Prostate gland (tissue), 2 donors: ENCODE measurements at regions of chr6 and their contacts with region 1.

Region 1: DNA sequence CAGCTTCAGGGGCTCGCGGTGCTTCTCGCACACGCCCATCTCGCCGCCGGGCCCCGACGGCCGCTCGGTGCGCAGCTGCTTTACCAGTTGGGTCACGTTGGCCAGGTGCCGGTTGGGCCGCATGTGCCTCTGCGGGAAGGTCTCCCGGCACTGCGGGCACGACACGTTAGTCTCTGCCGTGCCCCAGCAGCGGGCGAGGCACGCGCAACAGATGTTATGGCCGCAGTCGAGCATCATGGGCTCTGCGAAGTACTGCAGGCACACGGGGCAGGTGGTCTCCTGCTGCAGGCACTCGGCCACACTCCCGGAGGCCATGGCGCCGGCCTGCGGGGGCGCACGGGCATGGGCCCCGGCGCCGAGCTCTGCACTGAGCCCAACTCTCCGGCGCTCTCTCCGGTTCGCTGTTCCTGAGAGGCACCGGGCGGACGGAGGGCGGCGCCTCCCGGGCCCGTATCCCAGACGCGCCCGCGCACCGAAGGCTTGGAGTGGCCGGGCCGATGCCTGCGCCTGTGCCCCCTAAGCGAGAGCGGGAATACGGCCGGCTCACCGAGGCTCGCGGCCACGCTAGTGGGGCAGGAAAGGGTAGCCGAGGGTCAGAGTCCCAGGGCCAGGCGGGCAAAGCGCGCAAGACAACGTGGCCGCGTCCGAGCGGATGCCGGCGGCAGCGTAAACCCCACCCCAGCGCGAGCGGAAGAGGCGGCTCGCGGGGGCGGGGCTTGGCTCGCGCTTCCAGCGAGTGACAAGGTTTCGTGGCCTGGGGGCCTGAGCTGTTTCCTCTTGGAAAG is at the start of gene TRIM27:
- DNase-seq: peak; percentile 91
- H3K4me3 ChIP-seq: peak within 1 kb of the TSS; percentile 56 to 80
- H3K27ac ChIP-seq: peak within 1 kb of the TSS; percentile 93
- H3K4me1 ChIP-seq: no peaks in the 10 kb centered on the region
- H3K27me3 ChIP-seq: no peaks in the 10 kb centered on the region
- CTCF ChIP-seq: no peak
- POLR2A ChIP-seq: peak; percentile 85
- total RNA-seq, gene TRIM27: 79.2 to 85.7 TPM

Region 2: GRCh38 chr6:28657769-28658465 is 265.6 kb before region 1 on chr6:
- intact Hi-C with region 1: no loop called
- DNase-seq: no peak
- H3K4me3 ChIP-seq: peak overlapping the region in 1 of 2 donors; percentile 23
- H3K27ac ChIP-seq: no peak overlapping the region
- H3K4me1 ChIP-seq: no peaks in the 10 kb centered on the region
- H3K27me3 ChIP-seq: no peaks in the 10 kb centered on the region
- CTCF ChIP-seq: no peak
- POLR2A ChIP-seq: no peak

Region 3: DNA sequence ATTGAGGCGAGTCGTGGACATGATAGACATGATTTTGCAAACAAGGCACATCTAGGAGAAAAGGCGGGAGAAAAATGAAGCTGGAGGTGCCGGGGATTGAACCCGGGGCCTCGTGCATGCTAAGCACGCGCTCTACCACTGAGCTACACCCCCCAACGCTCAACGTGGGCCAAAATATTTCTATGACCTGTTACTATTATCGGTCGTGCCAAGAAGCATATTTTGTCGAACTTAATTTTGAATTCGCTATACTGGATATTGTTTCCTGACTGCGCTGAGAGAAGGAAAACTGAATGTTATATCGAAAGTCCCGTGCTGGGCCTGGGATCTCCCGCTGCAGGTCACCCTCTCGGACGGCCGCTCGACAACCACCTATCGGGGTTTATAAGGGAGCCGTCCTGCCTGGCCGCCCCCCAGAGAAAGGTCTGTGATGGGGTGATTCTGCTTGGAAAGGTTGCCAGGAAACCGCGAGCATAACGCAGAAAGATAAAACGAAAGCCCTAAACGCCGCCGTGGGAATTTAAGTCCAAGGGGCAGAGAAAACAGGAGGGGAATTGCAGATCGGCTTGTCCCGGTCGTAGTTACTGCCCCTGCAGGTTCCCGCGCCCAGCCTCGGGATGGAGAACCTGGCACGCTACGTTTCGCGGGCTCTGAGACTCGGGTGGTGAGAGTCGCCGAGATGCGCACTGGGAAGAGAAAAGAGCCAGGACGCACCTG is 59.7 kb before region 1 on chr6:
- intact Hi-C with region 1: no loop called
- DNase-seq: peak; percentile 68
- H3K4me3 ChIP-seq: peak overlapping the region; percentile 55 to 56
- H3K27ac ChIP-seq: peak overlapping the region; percentile 75 to 76
- H3K4me1 ChIP-seq: no peaks in the 10 kb centered on the region
- H3K27me3 ChIP-seq: no peaks in the 10 kb centered on the region
- CTCF ChIP-seq: peak in 2 of 4 experiments; percentile 8 to 24
- POLR2A ChIP-seq: no peak

Region 4: GRCh38 chr6:28884423-28885131 is 38.9 kb before region 1 on chr6:
- intact Hi-C with region 1: no loop called
- DNase-seq: no peak
- H3K4me3 ChIP-seq: no peak overlapping the region
- H3K27ac ChIP-seq: no peak overlapping the region
- H3K4me1 ChIP-seq: no peaks in the 10 kb centered on the region
- H3K27me3 ChIP-seq: no peaks in the 10 kb centered on the region
- CTCF ChIP-seq: no peak
- POLR2A ChIP-seq: no peak

Region 5: DNA sequence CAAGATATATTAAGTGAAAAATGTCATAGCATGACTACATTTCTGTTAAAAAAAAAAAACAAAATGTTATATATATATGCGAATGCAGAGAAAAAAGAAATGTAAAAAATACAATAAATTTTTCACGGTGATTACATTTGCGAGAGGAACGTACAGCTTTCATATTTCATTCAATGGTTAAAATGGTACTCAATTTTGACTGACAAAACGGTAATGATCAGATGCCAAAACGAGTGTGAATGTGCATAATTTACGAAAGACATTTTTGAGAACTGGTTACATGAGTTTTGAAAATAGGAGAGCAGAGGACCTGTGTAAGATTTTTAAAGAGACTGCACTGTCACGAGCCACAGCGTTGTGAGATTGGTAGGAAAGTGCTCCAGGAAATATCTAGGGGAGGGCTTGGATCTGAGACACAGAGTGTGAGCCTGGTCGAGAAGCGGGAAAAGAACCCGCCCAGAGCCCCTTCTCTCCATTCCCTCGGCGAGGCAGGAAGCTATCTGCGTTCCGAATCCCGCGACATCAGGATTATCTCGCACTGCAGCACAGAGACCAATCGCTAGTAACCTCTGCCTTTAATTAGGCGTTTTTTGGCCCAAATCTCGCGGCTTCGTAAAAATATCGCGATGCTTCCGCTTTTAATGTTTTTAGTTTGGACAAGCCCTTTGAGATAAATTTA is 28.2 kb before region 1 on chr6:
- intact Hi-C with region 1: loop called (anchors 1 kb)
- DNase-seq: peak; percentile 93
- H3K4me3 ChIP-seq: peak overlapping the region; percentile 53 to 55
- H3K27ac ChIP-seq: peak overlapping the region; percentile 94 to 99
- H3K4me1 ChIP-seq: no peaks in the 10 kb centered on the region
- H3K27me3 ChIP-seq: no peaks in the 10 kb centered on the region
- CTCF ChIP-seq: peak in 1 of 4 experiments; percentile 4
- POLR2A ChIP-seq: peak; percentile 70